Breast epithelium (tissue), 4 donors: ENCODE measurements at regions of chr7 and their contacts with region 1.

Region 1: GRCh38 chr7:111089822-111090426 is 1.0 kb upstream of the LRRN3 start:
- DNase-seq: no peak
- H3K4me3 ChIP-seq: no peak overlapping the region
- H3K27ac ChIP-seq: no peak overlapping the region
- H3K4me1 ChIP-seq: no peaks in the 10 kb centered on the region
- H3K27me3 ChIP-seq: no peaks in the 10 kb centered on the region
- CTCF ChIP-seq: peak; percentile 33 to 59 (median 36)
- POLR2A ChIP-seq: no peak

Region 2: DNA sequence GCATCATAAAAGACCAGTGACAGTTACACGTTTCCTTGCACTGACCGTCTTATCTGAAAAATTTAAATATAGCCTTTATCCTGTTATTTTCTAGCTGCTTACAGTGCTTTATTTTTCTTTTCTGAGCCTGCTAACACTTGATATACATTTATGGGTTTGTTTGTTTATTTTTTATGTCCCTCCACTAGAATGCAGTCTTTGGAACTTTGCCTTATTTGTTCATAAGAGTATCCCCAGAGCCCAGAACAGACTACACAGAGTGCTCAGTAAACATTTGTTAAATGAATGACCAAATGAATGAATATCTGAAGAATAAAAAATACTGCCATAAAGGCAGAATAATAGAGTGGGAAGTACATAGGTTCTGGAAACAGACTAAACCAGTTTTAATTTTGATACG is 201.3 kb before region 1 on chr7:
- intact Hi-C with region 1: loop called (anchors 5 kb)
- DNase-seq: no peak
- H3K4me3 ChIP-seq: no peak overlapping the region
- H3K27ac ChIP-seq: no peak overlapping the region
- H3K4me1 ChIP-seq: no peaks in the 10 kb centered on the region
- H3K27me3 ChIP-seq: no peaks in the 10 kb centered on the region
- CTCF ChIP-seq: no peak
- POLR2A ChIP-seq: no peak